ENCODE measurements at regions of chr2 and their contacts with region 1.

Region 1: DNA sequence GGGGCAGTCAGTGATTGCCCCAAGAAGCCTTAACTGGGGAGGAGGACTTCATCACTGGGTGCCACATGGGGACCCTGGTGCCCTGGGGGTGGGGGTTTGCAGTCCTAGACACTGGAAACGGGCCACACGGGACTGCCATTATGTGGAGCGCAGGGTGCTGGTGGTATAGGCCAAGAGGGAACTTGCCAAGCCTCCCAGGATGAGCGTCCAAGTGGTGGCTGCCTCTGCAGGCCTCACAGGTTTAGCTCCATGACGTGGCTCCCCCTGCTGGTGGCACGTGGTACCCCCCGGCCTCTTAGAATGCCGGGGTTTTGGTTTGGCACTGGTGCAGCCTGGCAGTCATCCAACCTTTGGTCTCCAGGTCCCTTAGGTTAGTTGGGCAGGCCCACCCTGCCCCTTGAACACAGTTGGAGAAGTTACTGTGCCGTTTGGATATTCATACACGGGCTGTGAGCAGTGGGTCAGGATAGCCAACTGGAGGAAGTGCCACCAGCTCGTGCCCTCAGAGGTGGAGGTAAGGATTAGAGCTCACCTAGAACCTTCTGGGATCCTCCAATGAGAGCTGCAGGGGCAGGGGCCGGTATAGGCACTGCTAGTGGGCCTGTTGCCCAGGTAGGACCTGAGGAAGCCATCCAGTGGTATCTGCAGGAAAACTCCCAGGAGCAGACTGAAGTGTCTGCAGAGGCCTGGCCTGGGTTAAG is 5.6 kb downstream of the PTMA start:
- DNase-seq: peak; percentile 56
- ATAC-seq: peak; percentile 58
- H3K4me3 ChIP-seq: 0 out of 2 replicates have a peak overlapping the region, but pooled peaks have one; percentile 15
- H3K27ac ChIP-seq: 0 out of 2 replicates have a peak overlapping the region, but pooled peaks have one; percentile 7
- H3K4me1 ChIP-seq: peaks cover 20% of the 10 kb centered on the region
- H3K27me3 ChIP-seq: no peaks in the 10 kb centered on the region
- CTCF ChIP-seq: peak; percentile 92 to 95 (median 95)
- EP300 ChIP-seq: no peak
- POLR2A ChIP-seq: no peak
- RAD21 ChIP-seq: peak; percentile 49

Region 2: GRCh38 chr2:231563378-231563961 is 150.4 kb before region 1 on chr2:
- CTCF ChIA-PET with region 1: interaction called, 17 read pairs
- POLR2A ChIA-PET with region 1: no interaction called
- RAD21 ChIA-PET with region 1: interaction called, 15 read pairs
- SMC1A ChIA-PET with region 1: interaction called, 3 read pairs
- in situ Hi-C with region 1: no loop called
- intact Hi-C with region 1: loop called (anchors 1 kb)
- DNase-seq: no peak
- ATAC-seq: peak; percentile 99
- H3K4me3 ChIP-seq: no peak overlapping the region
- H3K27ac ChIP-seq: no peak overlapping the region
- H3K4me1 ChIP-seq: no peaks in the 10 kb centered on the region; the same call in 1 of the 2 replicates
- H3K27me3 ChIP-seq: no peaks in the 10 kb centered on the region
- CTCF ChIP-seq: peak; percentile 59 to 89 (median 85); a peak in 5 of 6 replicates
- EP300 ChIP-seq: no peak
- POLR2A ChIP-seq: no peak
- RAD21 ChIP-seq: peak; percentile 83

Region 3: GRCh38 chr2:231612179-231613053 is 101.5 kb before region 1 on chr2:
- CTCF ChIA-PET with region 1: interaction called, 197 read pairs
- POLR2A ChIA-PET with region 1: interaction called, 70 read pairs
- RAD21 ChIA-PET with region 1: interaction called, 124 read pairs
- SMC1A ChIA-PET with region 1: interaction called, 54 read pairs
- in situ Hi-C with region 1: loop called (anchors 5 kb)
- intact Hi-C with region 1: loop called (anchors 2 kb)
- DNase-seq: peak; percentile 75
- ATAC-seq: peak; percentile 68
- H3K4me3 ChIP-seq: peak overlapping the region; percentile 78; the same call in 1 of the 2 replicates
- H3K27ac ChIP-seq: peak overlapping the region; percentile 99
- H3K4me1 ChIP-seq: peaks cover 29% of the 10 kb centered on the region
- H3K27me3 ChIP-seq: no peaks in the 10 kb centered on the region
- CTCF ChIP-seq: peak; percentile 93 to 96 (median 94)
- EP300 ChIP-seq: peak in 1 of 2 experiments; percentile 26; a peak in 1 of 4 replicates
- POLR2A ChIP-seq: 0 out of 2 replicates have a peak, but pooled peaks have one; percentile 26
- RAD21 ChIP-seq: peak; percentile 96

Region 4: GRCh38 chr2:231648587-231649174 is 65.2 kb before region 1 on chr2:
- CTCF ChIA-PET with region 1: interaction called, 66 read pairs
- POLR2A ChIA-PET with region 1: no interaction called
- RAD21 ChIA-PET with region 1: interaction called, 10 read pairs
- SMC1A ChIA-PET with region 1: interaction called, 9 read pairs
- in situ Hi-C with region 1: no loop called
- intact Hi-C with region 1: loop called (anchors 2 kb)
- DNase-seq: no peak
- ATAC-seq: peak; percentile 100
- H3K4me3 ChIP-seq: no peak overlapping the region
- H3K27ac ChIP-seq: no peak overlapping the region
- H3K4me1 ChIP-seq: no peaks in the 10 kb centered on the region
- H3K27me3 ChIP-seq: no peaks in the 10 kb centered on the region
- CTCF ChIP-seq: peak; percentile 64 to 85 (median 74)
- EP300 ChIP-seq: no peak
- POLR2A ChIP-seq: no peak
- RAD21 ChIP-seq: peak; percentile 81

Region 5: GRCh38 chr2:231680992-231681853 is 32.7 kb before region 1 on chr2:
- CTCF ChIA-PET with region 1: interaction called, 811 read pairs
- POLR2A ChIA-PET with region 1: interaction called, 102 read pairs
- RAD21 ChIA-PET with region 1: interaction called, 463 read pairs
- SMC1A ChIA-PET with region 1: interaction called, 343 read pairs
- in situ Hi-C with region 1: loop called (anchors 5 kb)
- intact Hi-C with region 1: loop called (anchors 1 kb)
- DNase-seq: no peak
- ATAC-seq: peak; percentile 80
- H3K4me3 ChIP-seq: peak overlapping the region; percentile 87
- H3K27ac ChIP-seq: peak overlapping the region; percentile 99
- H3K4me1 ChIP-seq: peaks cover 22% of the 10 kb centered on the region
- H3K27me3 ChIP-seq: no peaks in the 10 kb centered on the region
- CTCF ChIP-seq: no peak
- EP300 ChIP-seq: no peak
- POLR2A ChIP-seq: peak; percentile 84
- RAD21 ChIP-seq: no peak

Region 6: DNA sequence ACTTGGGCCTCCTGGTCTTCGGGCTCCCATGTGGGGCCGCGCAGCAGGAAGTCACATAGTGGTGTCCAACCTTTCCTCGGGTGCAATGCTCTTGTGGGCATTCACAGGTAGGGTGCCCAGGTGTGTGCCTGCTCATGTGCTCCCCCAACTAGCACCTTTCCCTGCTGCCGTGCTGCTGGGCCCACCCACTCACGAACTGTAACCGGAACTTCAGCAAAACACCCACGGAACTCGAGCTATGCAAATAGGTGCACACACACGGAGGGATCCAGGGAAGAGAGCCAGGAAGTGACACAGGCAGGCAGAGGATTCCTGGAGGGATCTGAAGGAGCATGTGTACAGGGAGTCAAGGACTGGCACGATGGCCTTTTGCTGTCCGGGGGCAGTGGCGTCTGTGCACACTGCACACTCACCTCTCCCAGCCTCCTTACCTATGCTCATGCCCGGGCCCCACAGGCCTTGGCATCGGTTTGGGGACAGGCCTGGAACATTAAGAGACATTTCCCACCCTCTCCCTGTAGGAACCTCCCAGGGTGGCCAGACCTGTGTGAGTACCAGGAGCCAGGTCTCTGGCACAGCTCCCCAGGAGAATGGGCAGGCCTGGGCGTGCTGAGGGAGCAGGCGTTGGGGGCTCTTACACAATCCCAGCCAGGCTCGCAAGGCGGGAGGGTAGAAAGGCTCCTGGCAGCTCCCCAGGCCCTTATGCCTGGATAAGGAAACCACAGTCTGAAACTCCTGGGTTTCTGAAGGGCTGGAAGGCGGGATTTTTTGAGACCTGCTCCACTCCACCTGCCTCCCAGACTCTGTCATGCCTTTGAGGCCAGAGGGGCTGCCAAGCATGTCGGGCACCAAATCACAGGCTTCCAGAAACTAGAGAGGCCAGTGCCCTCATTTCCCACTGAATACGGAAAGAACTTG is 12.2 kb before region 1 on chr2:
- CTCF ChIA-PET with region 1: interaction called, 65 read pairs
- POLR2A ChIA-PET with region 1: interaction called, 4 read pairs
- RAD21 ChIA-PET with region 1: interaction called, 12 read pairs
- SMC1A ChIA-PET with region 1: interaction called, 17 read pairs
- in situ Hi-C with region 1: no loop called
- intact Hi-C with region 1: no loop called
- DNase-seq: no peak
- ATAC-seq: no peak
- H3K4me3 ChIP-seq: no peak overlapping the region
- H3K27ac ChIP-seq: no peak overlapping the region
- H3K4me1 ChIP-seq: peaks cover 11% of the 10 kb centered on the region
- H3K27me3 ChIP-seq: no peaks in the 10 kb centered on the region
- CTCF ChIP-seq: no peak
- EP300 ChIP-seq: no peak
- POLR2A ChIP-seq: no peak
- RAD21 ChIP-seq: no peak

Region 7: GRCh38 chr2:231786177-231786916 is 72.5 kb after region 1 on chr2 and contains the start of gene COPS7B:
- CTCF ChIA-PET with region 1: interaction called, 22 read pairs
- POLR2A ChIA-PET with region 1: interaction called, 7 read pairs
- RAD21 ChIA-PET with region 1: interaction called, 20 read pairs
- SMC1A ChIA-PET with region 1: interaction called, 3 read pairs
- in situ Hi-C with region 1: no loop called
- intact Hi-C with region 1: no loop called
- DNase-seq: peak; percentile 35
- ATAC-seq: peak; percentile 83
- H3K4me3 ChIP-seq: peak within 1 kb of the TSS; percentile 91
- H3K27ac ChIP-seq: peak within 1 kb of the TSS; percentile 71
- H3K4me1 ChIP-seq: peaks cover 13% of the 10 kb centered on the region
- H3K27me3 ChIP-seq: no peaks in the 10 kb centered on the region
- CTCF ChIP-seq: peak; percentile 42 to 58 (median 46); a peak in 4 of 6 replicates
- EP300 ChIP-seq: peak; percentile 12 to 63; a peak in 1 of 4 replicates
- POLR2A ChIP-seq: peak; percentile 78
- RAD21 ChIP-seq: peak; percentile 40; the same call in 1 of the 2 replicates
- polyA plus RNA-seq, gene COPS7B: 6.3 to 9.6 TPM